ENCODE measurements at regions of chr6 and their contacts with region 1.

Region 1: GRCh38 chr6:152124429-152125074 is 317.1 kb downstream of the ESR1 start:
- DNase-seq: peak; percentile 75
- ATAC-seq: peak; percentile 85
- H3K4me3 ChIP-seq: no peak overlapping the region
- H3K27ac ChIP-seq: no peak overlapping the region
- H3K4me1 ChIP-seq: peaks cover 2% of the 10 kb centered on the region
- H3K27me3 ChIP-seq: no peaks in the 10 kb centered on the region
- CTCF ChIP-seq: peak; percentile 83
- POLR2A ChIP-seq: no peak
- RAD21 ChIP-seq: peak; percentile 78

Region 2: DNA sequence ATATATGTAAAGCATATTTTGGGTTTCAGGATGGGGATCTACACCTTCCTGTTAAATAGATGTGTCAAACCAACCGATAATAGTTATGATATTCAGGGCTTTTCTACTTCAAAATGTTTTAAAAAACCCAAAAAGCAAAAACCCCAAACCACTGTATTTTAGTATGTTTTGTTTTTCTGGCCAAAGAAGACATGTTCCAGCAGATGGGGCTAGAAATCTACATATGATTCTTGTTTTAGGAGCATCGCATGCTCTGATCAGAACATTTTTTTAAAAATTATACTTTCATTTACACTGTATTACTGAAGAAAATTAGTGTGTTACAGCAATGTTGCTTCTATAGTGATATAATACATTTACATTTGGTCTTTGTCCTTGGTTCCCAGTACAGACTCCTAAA is 683.6 kb before region 1 on chr6:
- CTCF ChIA-PET with region 1: no interaction called
- POLR2A ChIA-PET with region 1: no interaction called
- dilution Hi-C with region 1: no loop called
- in situ Hi-C with region 1: loop called (anchors 25 kb)
- intact Hi-C with region 1: loop called (anchors 10 kb)
- DNase-seq: peak; percentile 50
- ATAC-seq: no peak
- H3K4me3 ChIP-seq: no peak overlapping the region
- H3K27ac ChIP-seq: no peak overlapping the region
- H3K4me1 ChIP-seq: peaks cover 4% of the 10 kb centered on the region
- H3K27me3 ChIP-seq: no peaks in the 10 kb centered on the region
- CTCF ChIP-seq: peak; percentile 63
- POLR2A ChIP-seq: no peak
- RAD21 ChIP-seq: peak; percentile 63

Region 3: GRCh38 chr6:151675746-151676416 is 448.7 kb before region 1 on chr6:
- CTCF ChIA-PET with region 1: no interaction called
- POLR2A ChIA-PET with region 1: no interaction called
- dilution Hi-C with region 1: no loop called
- in situ Hi-C with region 1: no loop called
- intact Hi-C with region 1: loop called (anchors 10 kb)
- DNase-seq: peak; percentile 4
- ATAC-seq: peak; percentile 48; the same call in 1 of the 2 replicates
- H3K4me3 ChIP-seq: no peak overlapping the region
- H3K27ac ChIP-seq: no peak overlapping the region
- H3K4me1 ChIP-seq: no peaks in the 10 kb centered on the region
- H3K27me3 ChIP-seq: no peaks in the 10 kb centered on the region
- CTCF ChIP-seq: peak; percentile 52
- POLR2A ChIP-seq: no peak
- RAD21 ChIP-seq: peak; percentile 49

Region 4: GRCh38 chr6:151765444-151765886 is 359.1 kb before region 1 on chr6:
- CTCF ChIA-PET with region 1: interaction called, 22 read pairs
- POLR2A ChIA-PET with region 1: no interaction called
- dilution Hi-C with region 1: no loop called
- in situ Hi-C with region 1: loop called (anchors 5 kb)
- intact Hi-C with region 1: loop called (anchors 1 kb)
- DNase-seq: peak; percentile 77
- ATAC-seq: peak; percentile 70
- H3K4me3 ChIP-seq: no peak overlapping the region
- H3K27ac ChIP-seq: no peak overlapping the region
- H3K4me1 ChIP-seq: 0 out of 2 replicates have a peak, but pooled peaks cover 1% of the 10 kb centered on the region
- H3K27me3 ChIP-seq: no peaks in the 10 kb centered on the region
- CTCF ChIP-seq: peak; percentile 70
- POLR2A ChIP-seq: no peak
- RAD21 ChIP-seq: peak; percentile 62

Region 5: DNA sequence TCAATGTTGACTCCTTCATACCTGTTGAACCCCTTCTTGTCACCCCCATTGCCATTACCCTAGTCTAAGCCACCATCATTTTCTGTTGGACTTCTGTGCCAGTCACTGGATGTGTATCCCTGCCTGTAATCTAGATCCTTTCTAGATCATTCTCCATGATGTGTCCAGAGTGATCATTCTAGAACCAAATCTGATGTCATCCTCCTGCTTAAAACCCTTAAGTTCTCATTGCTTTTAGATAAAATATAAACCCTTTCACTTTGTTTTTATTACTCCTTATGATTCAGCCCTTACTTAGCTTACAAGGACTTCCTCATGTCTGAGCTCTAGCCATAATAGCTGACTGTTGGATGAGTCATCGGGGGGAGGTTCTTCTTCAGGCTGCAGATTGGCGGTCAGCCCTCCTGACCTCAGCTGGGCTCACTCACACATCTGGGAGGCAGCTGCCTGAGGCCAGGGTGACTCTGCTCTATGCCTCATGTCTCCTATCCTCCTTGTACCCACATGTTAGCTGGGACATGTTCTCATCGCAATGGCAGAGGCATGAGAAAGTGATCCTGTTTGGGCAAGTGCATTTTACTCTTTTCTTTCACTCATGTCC is 29.5 kb before region 1 on chr6:
- CTCF ChIA-PET with region 1: interaction called, 11 read pairs
- POLR2A ChIA-PET with region 1: no interaction called
- dilution Hi-C with region 1: no loop called
- in situ Hi-C with region 1: no loop called
- intact Hi-C with region 1: loop called (anchors 2 kb)
- DNase-seq: peak; percentile 100
- ATAC-seq: peak; percentile 88
- H3K4me3 ChIP-seq: no peak overlapping the region
- H3K27ac ChIP-seq: peak overlapping the region; percentile 87
- H3K4me1 ChIP-seq: peaks cover 27% of the 10 kb centered on the region
- H3K27me3 ChIP-seq: no peaks in the 10 kb centered on the region
- CTCF ChIP-seq: no peak
- POLR2A ChIP-seq: no peak
- RAD21 ChIP-seq: no peak

Measured in IMR-90 (cell line).